CD14-positive monocyte (primary cell): ENCODE measurements at regions of chr18 and their contacts with region 1.

Region 1: DNA sequence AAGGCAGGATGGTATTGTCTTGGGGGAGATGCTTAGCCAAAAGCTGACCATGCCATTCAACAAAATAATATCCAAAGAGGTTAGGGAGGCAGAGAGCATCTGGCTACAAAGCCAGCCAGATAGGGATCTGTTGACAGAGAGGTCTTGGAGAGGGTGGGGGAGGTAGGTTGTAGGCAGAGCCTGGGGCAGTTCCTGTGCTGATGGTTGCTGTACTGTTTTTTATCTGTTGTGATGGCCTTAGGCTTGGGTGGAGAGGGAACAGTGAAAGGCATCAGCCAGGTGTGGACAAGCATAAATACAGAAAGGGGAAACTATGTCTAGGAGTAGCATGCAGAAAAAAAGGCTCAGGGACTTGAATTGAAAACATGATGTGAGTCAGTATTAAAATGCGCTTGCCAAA is 100.9 kb downstream of the AQP4 start:
- DNase-seq: no peak
- H3K4me3 ChIP-seq: no peak overlapping the region
- H3K4me3 Mint-ChIP-seq: no peak overlapping the region
- H3K27ac ChIP-seq: no peak overlapping the region
- H3K27ac Mint-ChIP-seq: no peak overlapping the region
- H3K4me1 ChIP-seq: peaks cover 9% of the 10 kb centered on the region in 2 donors
- H3K4me1 Mint-ChIP-seq: peaks cover 9% of the 10 kb centered on the region
- H3K27me3 ChIP-seq: no peaks in the 10 kb centered on the region
- H3K27me3 Mint-ChIP-seq: peaks cover 2 to 5% (median 2%) of the 10 kb centered on the region in 3 donors
- CTCF ChIP-seq: no peak

Region 2: GRCh38 chr18:25247725-25248124 is 1516.9 kb before region 1 on chr18:
- intact Hi-C with region 1: no loop called
- DNase-seq: no peak
- H3K4me3 ChIP-seq: no peak overlapping the region
- H3K4me3 Mint-ChIP-seq: no peak overlapping the region
- H3K27ac ChIP-seq: no peak overlapping the region
- H3K27ac Mint-ChIP-seq: no peak overlapping the region
- H3K4me1 ChIP-seq: no peaks in the 10 kb centered on the region
- H3K4me1 Mint-ChIP-seq: peaks cover 13% of the 10 kb centered on the region
- H3K27me3 ChIP-seq: no peaks in the 10 kb centered on the region
- H3K27me3 Mint-ChIP-seq: no peaks in the 10 kb centered on the region
- CTCF ChIP-seq: no peak

Region 3: GRCh38 chr18:26642440-26643348 is 121.9 kb before region 1 on chr18:
- intact Hi-C with region 1: loop called in 1 of 2 experiments (anchors 10 kb)
- DNase-seq: peak; percentile 61 to 74 (median 62)
- H3K4me3 ChIP-seq: peak overlapping the region in 1 of 3 experiments; percentile 43
- H3K4me3 Mint-ChIP-seq: peak overlapping the region; percentile 55 to 62
- H3K27ac ChIP-seq: peak overlapping the region in 1 of 2 donors; percentile 57
- H3K27ac Mint-ChIP-seq: peak overlapping the region; percentile 43 to 85 (median 72)
- H3K4me1 ChIP-seq: peaks cover 30 to 34% of the 10 kb centered on the region in 2 donors
- H3K4me1 Mint-ChIP-seq: peaks cover 37% of the 10 kb centered on the region
- H3K27me3 ChIP-seq: peaks cover 38 to 54% of the 10 kb centered on the region in 2 donors
- H3K27me3 Mint-ChIP-seq: peaks cover 22 to 40% (median 34%) of the 10 kb centered on the region in 3 donors
- CTCF ChIP-seq: no peak

Region 4: GRCh38 chr18:26893996-26894395 is 129.4 kb after region 1 on chr18:
- intact Hi-C with region 1: no loop called
- DNase-seq: no peak
- H3K4me3 ChIP-seq: no peak overlapping the region
- H3K4me3 Mint-ChIP-seq: no peak overlapping the region
- H3K27ac ChIP-seq: no peak overlapping the region
- H3K27ac Mint-ChIP-seq: no peak overlapping the region
- H3K4me1 ChIP-seq: no peaks in the 10 kb centered on the region
- H3K4me1 Mint-ChIP-seq: no peaks in the 10 kb centered on the region
- H3K27me3 ChIP-seq: no peaks in the 10 kb centered on the region
- H3K27me3 Mint-ChIP-seq: peaks cover 1 to 3% (median 2%) of the 10 kb centered on the region in 3 donors
- CTCF ChIP-seq: no peak